ENCODE measurements at regions of chr10 and their contacts with region 1.

Region 1: DNA sequence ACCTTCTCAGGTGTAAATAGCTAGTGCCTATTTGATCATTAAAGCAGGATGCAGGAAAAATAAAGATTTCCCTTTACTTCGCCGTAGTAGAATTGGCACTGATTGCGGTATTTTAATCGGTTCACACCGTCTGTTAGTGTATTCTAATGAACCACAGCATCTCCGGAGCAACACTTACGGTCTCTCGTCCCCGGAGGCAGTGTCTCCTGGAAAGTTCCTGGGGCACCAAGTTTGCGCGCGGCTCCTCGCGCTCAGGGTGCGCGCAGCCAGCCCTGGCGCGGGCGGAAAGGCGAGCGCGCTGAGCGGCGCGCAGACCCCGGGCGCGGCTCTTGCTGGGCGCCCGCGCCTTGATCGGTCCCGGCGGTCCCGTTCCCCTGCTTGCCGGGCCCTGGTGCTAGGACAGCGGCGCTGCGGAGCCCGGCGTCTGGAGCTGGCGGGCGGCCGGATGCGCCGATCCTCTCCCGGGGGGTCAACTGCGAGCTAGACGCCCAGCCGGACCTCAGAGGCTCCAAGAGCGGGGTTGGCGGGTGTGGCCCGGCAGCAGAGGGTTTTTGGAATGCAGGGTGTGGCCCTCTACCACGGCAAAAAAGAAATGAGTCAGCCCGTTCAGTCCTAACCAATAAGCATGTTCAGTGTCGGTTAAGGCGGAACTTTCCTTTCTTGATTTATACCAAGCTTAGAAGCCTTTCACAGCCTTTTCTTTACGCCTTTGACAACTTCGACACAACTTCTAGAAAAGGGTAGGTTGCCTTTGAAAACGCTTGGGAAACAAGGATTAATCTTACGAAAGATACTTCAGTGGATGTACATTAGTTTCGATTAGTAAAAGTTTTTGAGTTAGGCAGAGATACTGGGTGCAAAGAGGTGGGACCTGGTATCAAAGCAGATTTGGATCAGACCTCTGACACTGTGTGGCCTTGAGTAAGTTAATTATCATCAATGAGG is 166.8 kb upstream of the ASAH2 start:
- DNase-seq: peak in 1 of 2 donors; percentile 79
- H3K4me3 ChIP-seq: peak overlapping the region; percentile 93 to 94
- H3K27ac ChIP-seq: peak overlapping the region; percentile 66 to 85
- H3K4me1 ChIP-seq: peaks cover 0 to 12% of the 10 kb centered on the region in 2 donors
- H3K27me3 ChIP-seq: no peaks in the 10 kb centered on the region
- CTCF ChIP-seq: no peak

Region 2: GRCh38 chr10:50325449-50326171 is 92.5 kb before region 1 on chr10:
- intact Hi-C with region 1: loop called (anchors 5 kb)
- DNase-seq: peak; percentile 50 to 91
- H3K4me3 ChIP-seq: peak overlapping the region in 1 of 2 donors; percentile 39
- H3K27ac ChIP-seq: peak overlapping the region; percentile 73 to 76
- H3K4me1 ChIP-seq: peaks cover 4 to 37% of the 10 kb centered on the region in 2 donors
- H3K27me3 ChIP-seq: no peaks in the 10 kb centered on the region
- CTCF ChIP-seq: no peak

Region 3: DNA sequence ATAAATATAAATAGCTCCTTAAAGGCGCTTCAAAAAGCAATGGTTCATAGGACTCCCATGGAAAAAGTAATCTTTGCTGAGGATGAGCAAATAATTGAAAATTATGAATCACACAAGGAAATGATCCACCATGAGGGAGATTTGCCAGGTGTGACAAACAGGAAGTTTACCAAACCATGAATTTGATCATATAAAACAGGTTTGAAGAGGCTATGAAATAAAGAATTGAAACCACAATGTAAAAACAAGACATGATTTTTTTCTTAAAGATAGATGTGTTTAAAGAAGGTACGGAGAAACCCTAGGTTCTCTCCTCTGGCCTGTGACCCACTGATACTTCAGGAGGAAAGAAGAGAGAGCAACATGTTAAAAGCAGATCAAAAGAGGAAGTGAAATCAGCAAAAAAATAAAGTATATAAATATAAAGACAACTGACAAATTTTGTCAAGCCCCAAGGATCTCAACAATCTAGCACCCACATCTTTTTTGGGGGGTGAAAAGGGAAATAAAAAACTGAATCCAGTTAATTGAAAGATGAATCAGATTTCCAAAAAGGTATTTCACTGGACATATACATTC is 55.5 kb before region 1 on chr10:
- intact Hi-C with region 1: loop called (anchors 5 kb)
- DNase-seq: no peak
- H3K4me3 ChIP-seq: no peak overlapping the region
- H3K27ac ChIP-seq: no peak overlapping the region
- H3K4me1 ChIP-seq: peaks cover 0 to 10% of the 10 kb centered on the region in 2 donors
- H3K27me3 ChIP-seq: no peaks in the 10 kb centered on the region
- CTCF ChIP-seq: no peak

Region 4: GRCh38 chr10:50497757-50498156 is 79.6 kb after region 1 on chr10:
- intact Hi-C with region 1: no loop called
- DNase-seq: no peak
- H3K4me3 ChIP-seq: peak overlapping the region in 1 of 2 donors; percentile 28
- H3K27ac ChIP-seq: peak overlapping the region; percentile 68 to 78
- H3K4me1 ChIP-seq: peaks cover 0 to 11% of the 10 kb centered on the region in 2 donors
- H3K27me3 ChIP-seq: no peaks in the 10 kb centered on the region
- CTCF ChIP-seq: no peak

Region 5: DNA sequence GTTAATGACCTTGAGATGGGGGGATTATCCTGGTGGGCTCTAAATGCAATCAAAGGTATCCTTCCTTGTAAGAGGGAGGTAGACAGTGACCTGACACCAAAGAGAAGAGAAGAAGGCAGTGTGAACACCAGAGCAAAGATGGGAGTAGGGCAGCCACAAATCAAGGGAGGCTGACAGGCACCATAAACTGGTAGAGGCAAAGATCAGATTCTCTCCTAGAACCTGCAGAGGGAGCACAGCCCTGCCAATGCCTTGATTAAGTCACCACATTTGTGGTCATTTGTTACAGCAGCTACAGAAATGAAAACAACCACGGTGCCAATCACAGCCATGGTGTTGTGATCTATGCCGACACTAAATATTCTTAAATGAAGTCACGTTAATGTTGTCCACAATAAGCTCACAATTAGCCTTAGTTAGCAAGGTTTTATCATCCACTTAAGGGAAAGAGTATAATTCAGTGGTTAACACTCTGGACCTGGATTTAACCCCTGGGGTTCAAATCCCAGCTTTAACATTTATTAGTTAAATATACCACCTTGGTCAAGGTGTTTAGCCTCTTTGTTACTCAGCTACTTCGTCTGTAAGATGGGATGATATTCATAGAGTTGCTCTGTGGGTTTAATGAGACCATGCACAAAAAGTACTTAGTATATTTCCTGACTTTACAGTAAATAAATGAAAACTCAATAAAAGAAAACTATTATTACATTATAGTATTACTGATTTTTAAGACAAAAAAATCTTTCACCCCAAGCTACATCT is 134.8 kb after region 1 on chr10:
- intact Hi-C with region 1: loop called (anchors 5 kb)
- DNase-seq: no peak
- H3K4me3 ChIP-seq: no peak overlapping the region
- H3K27ac ChIP-seq: peak overlapping the region; percentile 69 to 72
- H3K4me1 ChIP-seq: peaks cover 14 to 55% of the 10 kb centered on the region in 2 donors
- H3K27me3 ChIP-seq: no peaks in the 10 kb centered on the region
- CTCF ChIP-seq: peak in 1 of 3 experiments; percentile 30